Caco-2 (cell line): ENCODE measurements at regions of chr5 and their contacts with region 1.

Region 1: GRCh38 chr5:171647032-171647903 is 138.3 kb upstream of the SMIM23 start:
- DNase-seq: peak in 1 of 2 experiments; percentile 39
- H3K4me3 ChIP-seq: no peak overlapping the region
- H3K4me3 Mint-ChIP-seq: no peak overlapping the region
- H3K27ac Mint-ChIP-seq: no peak overlapping the region
- H3K4me1 ChIP-seq: no peaks in the 10 kb centered on the region
- H3K4me1 Mint-ChIP-seq: no peaks in the 10 kb centered on the region
- H3K27me3 ChIP-seq: no peaks in the 10 kb centered on the region
- H3K27me3 Mint-ChIP-seq: peaks cover 21% of the 10 kb centered on the region
- CTCF ChIP-seq: no peak

Region 2: GRCh38 chr5:171635561-171636245 is 11.6 kb before region 1 on chr5:
- CTCF ChIA-PET with region 1: no interaction called
- POLR2A ChIA-PET with region 1: no interaction called
- intact Hi-C with region 1: loop called (anchors 1 kb)
- DNase-seq: no peak
- H3K4me3 ChIP-seq: no peak overlapping the region
- H3K4me3 Mint-ChIP-seq: no peak overlapping the region
- H3K27ac Mint-ChIP-seq: no peak overlapping the region
- H3K4me1 ChIP-seq: no peaks in the 10 kb centered on the region
- H3K4me1 Mint-ChIP-seq: no peaks in the 10 kb centered on the region
- H3K27me3 ChIP-seq: no peaks in the 10 kb centered on the region; the same call in 1 of the 2 replicates
- H3K27me3 Mint-ChIP-seq: peaks cover 14% of the 10 kb centered on the region
- CTCF ChIP-seq: no peak

Region 3: GRCh38 chr5:171736976-171737891 is 90.0 kb after region 1 on chr5:
- CTCF ChIA-PET with region 1: no interaction called
- POLR2A ChIA-PET with region 1: no interaction called
- intact Hi-C with region 1: no loop called
- DNase-seq: no peak
- H3K4me3 ChIP-seq: no peak overlapping the region
- H3K4me3 Mint-ChIP-seq: no peak overlapping the region
- H3K27ac Mint-ChIP-seq: no peak overlapping the region
- H3K4me1 ChIP-seq: no peaks in the 10 kb centered on the region
- H3K4me1 Mint-ChIP-seq: no peaks in the 10 kb centered on the region
- H3K27me3 ChIP-seq: no peaks in the 10 kb centered on the region; the same call in 1 of the 2 replicates
- H3K27me3 Mint-ChIP-seq: peaks cover 16% of the 10 kb centered on the region
- CTCF ChIP-seq: no peak

Region 4: DNA sequence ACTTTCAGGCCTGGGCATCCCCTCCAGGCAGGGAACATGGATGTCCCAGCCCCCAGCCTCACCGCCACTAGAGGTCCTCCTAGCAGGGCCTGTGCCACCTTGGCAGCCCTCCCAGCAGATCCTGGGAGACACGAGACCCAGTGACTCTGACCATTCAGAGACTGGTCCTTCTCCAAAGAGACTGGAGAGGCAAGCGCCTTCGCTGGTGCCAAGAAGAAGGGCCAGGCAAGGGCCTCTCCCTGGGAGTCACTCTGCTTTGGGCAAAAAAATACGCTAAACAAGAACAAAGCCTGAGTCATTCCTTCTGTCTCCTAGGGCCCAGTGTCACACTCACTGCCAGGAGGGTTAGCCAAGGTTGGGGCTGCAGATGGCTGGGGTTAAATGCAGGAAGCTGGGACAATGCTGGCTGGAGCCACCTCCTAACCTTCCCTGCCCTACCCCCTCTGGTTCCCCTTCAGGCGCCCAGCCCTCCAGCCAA is 103.1 kb after region 1 on chr5:
- CTCF ChIA-PET with region 1: no interaction called
- POLR2A ChIA-PET with region 1: no interaction called
- intact Hi-C with region 1: no loop called
- DNase-seq: peak in 1 of 2 experiments; percentile 11
- H3K4me3 ChIP-seq: no peak overlapping the region
- H3K4me3 Mint-ChIP-seq: no peak overlapping the region
- H3K27ac Mint-ChIP-seq: no peak overlapping the region
- H3K4me1 ChIP-seq: no peaks in the 10 kb centered on the region
- H3K4me1 Mint-ChIP-seq: no peaks in the 10 kb centered on the region
- H3K27me3 ChIP-seq: no peaks in the 10 kb centered on the region; the same call in 1 of the 2 replicates
- H3K27me3 Mint-ChIP-seq: peaks cover 3% of the 10 kb centered on the region
- CTCF ChIP-seq: no peak